Ascending aorta (tissue), 2 donors: ENCODE measurements at regions of chr2 and their contacts with region 1.

Region 1: DNA sequence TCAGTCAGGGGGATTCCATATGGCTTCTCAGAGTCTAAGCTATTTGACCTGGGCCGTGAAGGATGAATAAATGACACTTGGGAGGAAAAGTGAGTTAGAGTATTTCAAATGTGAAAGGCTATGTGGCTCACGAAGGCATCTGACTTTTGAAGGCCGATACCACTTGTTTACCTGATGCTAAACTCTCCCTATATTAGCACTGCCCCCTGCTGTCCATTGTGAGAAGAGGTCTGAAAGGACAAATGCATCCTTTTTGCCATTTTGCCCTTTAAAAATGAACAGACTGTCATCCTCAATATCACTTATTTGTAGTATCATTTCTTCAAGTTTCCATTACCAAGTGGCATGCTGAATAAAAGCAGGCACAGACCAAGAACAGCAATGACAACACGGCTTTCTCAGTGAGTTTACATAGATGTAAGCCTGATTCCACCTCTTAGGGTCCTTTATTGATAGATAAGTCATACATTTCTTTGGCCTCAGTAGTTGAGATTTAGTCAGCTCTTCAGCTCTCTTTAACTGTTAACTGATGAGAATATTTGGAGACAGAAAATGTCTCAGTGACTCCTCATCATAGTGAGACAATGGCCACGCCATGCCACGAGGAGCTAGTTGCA is 40.1 kb downstream of the DOCK10 start:
- DNase-seq: peak in 1 of 2 donors; percentile 79
- H3K4me3 ChIP-seq: no peak overlapping the region
- H3K27ac ChIP-seq: no peak overlapping the region
- H3K4me1 ChIP-seq: peaks cover 0 to 15% of the 10 kb centered on the region in 2 donors
- H3K27me3 ChIP-seq: no peaks in the 10 kb centered on the region
- CTCF ChIP-seq: peak; percentile 69 to 88 (median 76)

Region 2: DNA sequence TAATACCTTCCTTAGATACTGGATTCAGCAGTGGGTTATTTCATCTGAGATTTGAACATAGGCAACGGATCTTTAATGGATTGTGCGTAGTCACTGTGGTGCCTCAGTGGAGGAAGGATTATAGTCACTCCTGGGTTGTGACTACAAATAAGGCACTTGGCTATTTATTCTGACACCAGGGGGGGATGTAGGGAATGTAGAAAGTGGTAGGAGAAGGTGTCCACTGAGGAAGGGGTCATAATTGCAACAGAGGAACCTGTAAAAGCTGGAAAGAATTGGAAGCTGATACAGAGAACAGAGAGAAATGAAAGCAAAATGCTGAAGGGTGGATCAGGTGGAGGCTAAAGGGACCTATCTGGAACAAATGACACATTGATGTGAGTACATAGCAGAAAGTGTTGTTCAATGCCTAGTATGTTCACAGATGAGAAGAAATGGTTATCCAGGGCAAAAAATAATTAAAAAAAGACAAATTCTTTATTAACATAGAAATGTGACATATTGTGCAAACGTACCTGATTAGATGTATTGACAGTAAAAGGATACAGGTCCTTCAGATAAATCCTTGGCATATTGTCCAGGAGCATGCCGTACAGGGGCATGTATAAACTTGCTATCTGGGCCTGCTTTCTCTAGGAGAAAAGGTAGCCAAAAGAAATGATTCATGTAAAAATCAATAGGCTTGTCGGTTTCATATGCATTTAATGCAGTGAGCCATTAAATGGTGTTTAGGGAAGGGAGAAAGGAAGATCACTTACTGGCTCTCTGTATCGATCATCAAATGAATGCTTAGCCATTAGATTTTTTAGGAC is 194.8 kb before region 1 on chr2:
- intact Hi-C with region 1: loop called (anchors 5 kb)
- DNase-seq: no peak
- H3K4me3 ChIP-seq: no peak overlapping the region
- H3K27ac ChIP-seq: no peak overlapping the region
- H3K4me1 ChIP-seq: peaks cover 0 to 5% of the 10 kb centered on the region in 2 donors
- H3K27me3 ChIP-seq: no peaks in the 10 kb centered on the region
- CTCF ChIP-seq: peak in 2 of 3 experiments; percentile 7 to 27

Region 3: DNA sequence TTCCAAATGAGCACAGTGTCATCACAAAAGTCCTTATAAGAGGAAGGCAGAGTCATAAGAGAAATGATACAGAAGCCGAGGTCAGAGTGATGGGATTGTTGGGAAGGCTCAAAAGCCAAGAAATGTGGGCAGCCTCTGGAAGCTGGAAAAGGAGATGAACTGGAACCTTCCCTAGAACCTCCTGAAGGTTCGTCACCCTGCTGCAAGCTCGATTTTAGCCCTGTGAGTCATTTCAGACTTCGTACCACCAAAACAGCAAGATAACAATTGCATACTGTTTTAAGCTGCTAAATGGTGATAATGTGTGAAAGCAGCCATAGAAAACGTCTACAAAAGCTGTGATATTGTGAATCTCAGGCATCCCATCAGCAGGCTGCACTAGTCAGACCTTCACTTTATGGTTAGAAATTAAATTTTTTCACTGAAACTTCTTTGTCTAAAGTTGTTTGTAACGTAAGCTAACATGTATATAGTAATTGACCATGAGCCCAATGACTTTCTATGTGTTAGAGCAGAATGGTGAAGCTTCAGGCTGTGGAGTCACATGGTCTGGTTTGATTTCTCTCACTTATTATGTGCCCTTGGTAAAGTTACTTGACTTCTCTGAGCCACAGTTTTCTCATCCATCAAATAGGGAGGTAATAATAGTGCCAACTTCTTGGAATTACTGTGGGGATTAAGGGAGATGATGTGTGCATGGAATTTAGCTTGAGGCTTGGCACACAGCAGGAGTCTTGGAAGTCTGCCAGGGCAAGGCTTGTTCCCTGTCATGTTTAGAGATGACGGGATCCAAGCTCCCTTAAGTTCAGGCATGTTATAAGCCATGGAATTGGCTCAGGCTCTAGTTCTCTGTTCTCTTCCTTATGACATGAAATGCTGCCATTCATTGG is 153.9 kb before region 1 on chr2:
- intact Hi-C with region 1: loop called (anchors 5 kb)
- DNase-seq: peak in 1 of 2 donors; percentile 79
- H3K4me3 ChIP-seq: no peak overlapping the region
- H3K27ac ChIP-seq: no peak overlapping the region
- H3K4me1 ChIP-seq: peaks cover 0 to 5% of the 10 kb centered on the region in 2 donors
- H3K27me3 ChIP-seq: no peaks in the 10 kb centered on the region
- CTCF ChIP-seq: no peak

Region 4: DNA sequence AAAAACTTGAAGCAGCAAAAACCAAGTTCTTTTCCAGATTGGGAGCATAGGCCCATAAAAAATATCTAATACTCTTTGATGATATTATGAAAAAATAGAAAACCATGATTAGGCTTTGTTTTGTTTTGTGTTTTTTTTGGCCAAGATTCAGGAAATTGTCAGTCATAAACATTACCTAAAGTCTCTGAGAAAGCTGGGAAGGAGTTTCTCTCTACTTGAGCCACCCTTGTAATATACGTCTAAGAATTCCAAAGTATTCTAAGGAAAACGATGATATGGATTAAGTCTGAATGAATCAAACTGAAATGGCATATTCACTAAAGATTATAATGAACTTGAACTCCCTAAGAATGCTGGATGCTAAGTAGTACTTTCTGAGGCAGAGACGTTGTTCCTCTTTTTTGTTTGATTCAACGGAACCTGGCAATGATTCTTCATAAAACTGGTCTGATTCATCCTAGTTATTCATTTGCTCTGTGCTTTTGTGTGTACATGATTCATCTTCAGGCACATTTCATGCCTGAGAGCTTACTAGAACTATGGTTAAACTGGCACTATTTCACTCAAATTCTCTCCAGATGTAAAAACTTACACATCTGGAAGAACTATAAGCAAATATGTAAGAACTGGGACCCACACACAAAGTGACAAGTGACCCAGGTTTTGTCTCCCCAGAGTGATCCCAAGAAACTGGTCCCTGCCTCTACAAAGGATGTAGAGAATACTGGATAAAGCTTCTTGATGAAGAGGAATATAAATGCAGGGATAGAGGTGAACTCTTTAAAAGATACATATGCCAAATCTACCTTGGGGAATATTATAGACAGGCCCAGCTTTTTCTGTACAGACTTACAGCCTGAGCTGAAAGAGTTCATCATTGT is 119.6 kb before region 1 on chr2:
- intact Hi-C with region 1: loop called (anchors 5 kb)
- DNase-seq: no peak
- H3K4me3 ChIP-seq: no peak overlapping the region
- H3K27ac ChIP-seq: peak overlapping the region; percentile 39 to 53
- H3K4me1 ChIP-seq: peaks cover 0 to 14% of the 10 kb centered on the region in 2 donors
- H3K27me3 ChIP-seq: no peaks in the 10 kb centered on the region
- CTCF ChIP-seq: no peak

Region 5: DNA sequence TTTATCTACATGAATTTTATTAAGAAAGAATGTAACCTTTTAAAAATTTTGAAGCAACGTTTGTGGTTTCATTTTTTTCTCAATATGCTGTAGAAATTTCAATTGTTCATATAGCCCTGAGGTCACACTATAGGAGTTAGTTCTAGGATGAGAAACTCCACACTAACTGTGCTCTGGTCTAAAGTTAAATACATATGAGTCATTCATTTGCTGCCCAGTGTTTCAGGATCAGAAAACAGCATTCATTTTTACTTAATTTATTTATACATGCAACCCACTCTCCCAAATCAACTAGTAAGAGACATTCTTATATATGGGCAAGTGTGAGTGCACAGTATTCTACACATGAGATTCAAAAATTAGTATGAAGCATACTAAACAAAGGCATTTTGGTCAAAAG is 97.8 kb before region 1 on chr2:
- intact Hi-C with region 1: no loop called
- DNase-seq: no peak
- H3K4me3 ChIP-seq: no peak overlapping the region
- H3K27ac ChIP-seq: no peak overlapping the region
- H3K4me1 ChIP-seq: peaks cover 5 to 7% of the 10 kb centered on the region in 2 donors
- H3K27me3 ChIP-seq: no peaks in the 10 kb centered on the region
- CTCF ChIP-seq: no peak